Activated CD8-positive, alpha-beta T cell treated with anti-CD3 and anti-CD28 coated beads, Interleukin-2, amount 10 ng/mL, durations not matched to agents 7 days and 5 days (primary cell): ENCODE measurements at regions of chr12 and their contacts with region 1.

Region 1: DNA sequence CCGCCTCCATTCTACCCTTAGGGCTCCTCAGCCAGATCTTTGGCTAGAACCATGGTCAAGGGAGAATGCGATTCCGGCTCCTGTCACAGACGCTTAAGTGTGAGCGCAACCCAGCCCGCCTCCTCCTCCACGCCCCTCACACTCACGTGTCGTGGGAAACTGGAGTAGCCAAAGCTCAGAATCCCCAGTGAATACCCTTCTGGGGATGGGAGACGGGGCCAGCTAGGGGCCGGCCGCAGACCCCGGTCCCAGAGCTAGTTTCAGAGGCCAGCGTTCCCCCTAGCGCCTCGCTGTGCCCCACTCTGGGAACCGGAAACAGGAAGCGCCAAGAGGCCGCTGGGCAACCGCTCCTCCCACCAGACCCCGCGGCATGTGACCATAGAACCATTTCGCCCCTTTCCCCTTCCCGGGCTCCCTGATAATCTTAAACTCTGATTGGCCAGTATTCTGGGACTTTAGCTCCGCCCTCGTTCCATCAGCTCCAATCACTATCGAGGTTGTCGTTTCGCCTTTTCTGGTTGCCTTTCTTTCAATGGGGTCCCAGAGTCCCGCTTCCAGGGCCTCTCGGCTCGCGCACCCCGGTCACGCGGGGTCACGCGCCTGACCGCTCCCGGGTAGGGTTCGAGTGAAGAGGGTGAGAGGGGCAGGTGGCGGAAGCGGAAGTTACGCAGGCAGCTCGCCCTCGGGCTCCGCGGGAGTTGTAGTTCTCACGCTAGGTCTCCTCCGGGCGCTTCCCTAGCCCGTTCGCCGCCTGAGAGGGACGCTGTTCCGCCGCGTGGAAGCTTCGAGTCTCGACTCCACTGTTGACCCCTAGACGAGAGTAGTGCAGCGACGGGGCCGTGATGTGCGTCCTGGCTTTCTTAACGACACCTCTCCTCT is at the start of gene M6PR:
- DNase-seq: peak; percentile 96
- ATAC-seq: peak; percentile 85
- H3K4me3 Mint-ChIP-seq: peak within 1 kb of the TSS; percentile 95
- H3K27ac Mint-ChIP-seq: peak within 1 kb of the TSS; percentile 96
- H3K4me1 Mint-ChIP-seq: peaks cover 53% of the 10 kb centered on the region
- H3K27me3 Mint-ChIP-seq: no peaks in the 10 kb centered on the region
- total RNA-seq, gene M6PR: 170 to 201 TPM

Region 2: GRCh38 chr12:8914716-8915526 is 34.7 kb before region 1 on chr12:
- CTCF ChIA-PET with region 1: interaction called, 10 read pairs
- POLR2A ChIA-PET with region 1: interaction called, 14 read pairs
- DNase-seq: peak; percentile 74
- ATAC-seq: peak; percentile 94
- H3K4me3 Mint-ChIP-seq: no peak overlapping the region
- H3K27ac Mint-ChIP-seq: no peak overlapping the region
- H3K4me1 Mint-ChIP-seq: peaks cover 8% of the 10 kb centered on the region
- H3K27me3 Mint-ChIP-seq: peaks cover 15% of the 10 kb centered on the region

Region 3: GRCh38 chr12:8996682-8997360 is 47.2 kb after region 1 on chr12:
- CTCF ChIA-PET with region 1: interaction called, 10 read pairs
- POLR2A ChIA-PET with region 1: interaction called, 6 read pairs
- DNase-seq: no peak
- ATAC-seq: peak; percentile 75
- H3K4me3 Mint-ChIP-seq: no peak overlapping the region
- H3K27ac Mint-ChIP-seq: peak overlapping the region; percentile 16
- H3K4me1 Mint-ChIP-seq: peaks cover 17% of the 10 kb centered on the region
- H3K27me3 Mint-ChIP-seq: no peaks in the 10 kb centered on the region

Region 4: GRCh38 chr12:9027161-9028059 is 77.8 kb after region 1 on chr12:
- CTCF ChIA-PET with region 1: interaction called, 238 read pairs
- POLR2A ChIA-PET with region 1: interaction called, 19 read pairs
- DNase-seq: peak; percentile 54
- ATAC-seq: no peak
- H3K4me3 Mint-ChIP-seq: peak overlapping the region; percentile 22
- H3K27ac Mint-ChIP-seq: peak overlapping the region; percentile 82
- H3K4me1 Mint-ChIP-seq: peaks cover 25% of the 10 kb centered on the region
- H3K27me3 Mint-ChIP-seq: no peaks in the 10 kb centered on the region

Region 5: DNA sequence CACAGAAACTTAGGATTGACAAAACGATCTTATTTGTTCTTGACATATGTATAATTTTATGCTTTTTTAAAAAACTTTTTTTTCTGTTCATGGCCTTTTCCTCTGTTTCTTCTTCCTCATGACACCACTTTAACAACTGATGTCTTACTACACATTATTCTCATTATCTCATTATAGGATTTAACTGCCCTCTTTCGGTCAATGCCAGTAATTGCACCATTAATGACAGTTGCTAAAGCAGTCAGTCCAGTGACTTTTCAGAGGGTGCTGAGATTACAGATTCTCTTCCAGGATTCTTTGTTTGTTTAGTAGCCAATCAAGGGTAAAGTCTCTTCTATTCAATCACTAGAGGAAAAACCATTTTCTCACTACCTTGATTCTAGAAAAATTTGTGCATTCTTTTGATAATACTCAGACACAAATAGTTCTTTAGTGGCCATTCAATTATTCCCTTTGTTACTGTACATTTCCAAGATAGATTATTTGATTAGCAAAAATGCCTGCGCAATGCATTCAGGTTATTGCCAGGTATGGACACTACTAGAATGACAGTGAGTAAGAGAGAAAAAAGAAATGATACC is 89.9 kb after region 1 on chr12:
- CTCF ChIA-PET with region 1: interaction called, 238 read pairs
- POLR2A ChIA-PET with region 1: interaction called, 7 read pairs
- DNase-seq: peak; percentile 43
- ATAC-seq: no peak
- H3K4me3 Mint-ChIP-seq: no peak overlapping the region
- H3K27ac Mint-ChIP-seq: no peak overlapping the region
- H3K4me1 Mint-ChIP-seq: peaks cover 23% of the 10 kb centered on the region
- H3K27me3 Mint-ChIP-seq: peaks cover 3% of the 10 kb centered on the region

Region 6: GRCh38 chr12:9198012-9198411 is 248.4 kb after region 1 on chr12:
- CTCF ChIA-PET with region 1: no interaction called
- POLR2A ChIA-PET with region 1: no interaction called
- DNase-seq: no peak
- ATAC-seq: peak; percentile 39
- H3K4me3 Mint-ChIP-seq: no peak overlapping the region
- H3K27ac Mint-ChIP-seq: no peak overlapping the region
- H3K4me1 Mint-ChIP-seq: no peaks in the 10 kb centered on the region
- H3K27me3 Mint-ChIP-seq: peaks cover 4% of the 10 kb centered on the region